OCI-LY7 (cell line): ENCODE measurements at regions of chr9 and their contacts with region 1.

Region 1: GRCh38 chr9:134733480-134734232 is 92.1 kb downstream of the COL5A1 start:
- DNase-seq: no peak
- H3K4me3 ChIP-seq: no peak overlapping the region
- H3K27ac ChIP-seq: no peak overlapping the region
- H3K4me1 ChIP-seq: no peaks in the 10 kb centered on the region
- CTCF ChIP-seq: no peak

Region 2: GRCh38 chr9:135130266-135130976 is 396.8 kb after region 1 on chr9:
- CTCF ChIA-PET with region 1: no interaction called
- POLR2A ChIA-PET with region 1: no interaction called
- intact Hi-C with region 1: no loop called
- DNase-seq: no peak
- H3K4me3 ChIP-seq: no peak overlapping the region
- H3K27ac ChIP-seq: no peak overlapping the region
- H3K4me1 ChIP-seq: no peaks in the 10 kb centered on the region
- CTCF ChIP-seq: no peak

Region 3: DNA sequence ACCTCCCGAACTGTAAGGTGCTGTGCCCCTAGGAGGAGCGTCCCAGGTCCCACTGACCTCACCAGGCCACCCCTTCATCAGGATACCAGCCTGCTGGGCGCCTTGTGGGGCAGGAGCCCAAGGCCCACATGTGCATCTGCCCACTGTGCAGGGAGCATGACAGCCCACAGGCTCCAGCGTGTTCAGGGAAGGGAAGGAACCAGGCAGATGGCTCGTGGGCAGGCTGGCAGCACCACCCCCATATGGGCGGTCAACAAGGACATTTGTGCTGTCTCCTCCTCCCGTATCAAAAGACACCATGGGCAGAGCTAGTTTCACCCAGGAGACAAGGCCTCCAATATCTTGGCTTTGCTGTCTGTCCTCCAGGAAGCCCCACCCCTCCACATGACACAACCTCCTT is 660.5 kb after region 1 on chr9:
- CTCF ChIA-PET with region 1: interaction called, 22 read pairs
- POLR2A ChIA-PET with region 1: no interaction called
- intact Hi-C with region 1: no loop called
- DNase-seq: no peak
- H3K4me3 ChIP-seq: no peak overlapping the region
- H3K27ac ChIP-seq: no peak overlapping the region
- H3K4me1 ChIP-seq: no peaks in the 10 kb centered on the region
- CTCF ChIP-seq: no peak